ENCODE measurements at regions of chr21 and their contacts with region 1.

Region 1: GRCh38 chr21:15472108-15473040 is 257.4 kb upstream of the USP25 start:
- DNase-seq: no peak
- ATAC-seq: no peak
- H3K4me3 ChIP-seq: no peak overlapping the region
- H3K27ac ChIP-seq: no peak overlapping the region
- H3K4me1 ChIP-seq: peaks cover 0 to 7% (median 0%) of the 10 kb centered on the region in 12 donors
- H3K27me3 ChIP-seq: no peaks in the 10 kb centered on the region
- CTCF ChIP-seq: no peak
- POLR2A ChIP-seq: no peak

Region 2: DNA sequence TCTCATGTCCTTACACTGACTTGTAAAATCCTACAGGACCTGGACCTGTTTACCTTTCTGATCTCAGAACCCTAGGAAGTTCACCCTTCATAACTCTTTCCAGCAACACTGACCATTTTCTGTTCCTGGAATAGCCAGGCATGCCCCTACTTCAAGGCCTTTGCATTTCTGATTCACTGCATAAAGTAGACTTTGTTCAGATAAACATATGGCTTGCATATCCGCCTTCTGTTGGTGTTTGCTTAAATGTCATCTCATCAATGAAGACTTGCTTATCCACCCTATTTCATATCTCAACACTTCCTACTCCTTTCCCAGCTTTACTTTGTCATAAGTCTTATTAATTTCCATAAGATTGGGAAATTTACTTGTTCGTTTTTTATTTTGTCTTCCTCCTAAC is 1146.8 kb before region 1 on chr21:
- intact Hi-C with region 1: loop called in 1 of 10 experiments (anchors 5 kb)
- DNase-seq: no peak
- ATAC-seq: no peak
- H3K4me3 ChIP-seq: no peak overlapping the region
- H3K27ac ChIP-seq: no peak overlapping the region
- H3K4me1 ChIP-seq: no peaks in the 10 kb centered on the region
- H3K27me3 ChIP-seq: peaks cover 0 to 3% (median 0%) of the 10 kb centered on the region in 9 donors
- CTCF ChIP-seq: no peak
- POLR2A ChIP-seq: no peak

Region 3: DNA sequence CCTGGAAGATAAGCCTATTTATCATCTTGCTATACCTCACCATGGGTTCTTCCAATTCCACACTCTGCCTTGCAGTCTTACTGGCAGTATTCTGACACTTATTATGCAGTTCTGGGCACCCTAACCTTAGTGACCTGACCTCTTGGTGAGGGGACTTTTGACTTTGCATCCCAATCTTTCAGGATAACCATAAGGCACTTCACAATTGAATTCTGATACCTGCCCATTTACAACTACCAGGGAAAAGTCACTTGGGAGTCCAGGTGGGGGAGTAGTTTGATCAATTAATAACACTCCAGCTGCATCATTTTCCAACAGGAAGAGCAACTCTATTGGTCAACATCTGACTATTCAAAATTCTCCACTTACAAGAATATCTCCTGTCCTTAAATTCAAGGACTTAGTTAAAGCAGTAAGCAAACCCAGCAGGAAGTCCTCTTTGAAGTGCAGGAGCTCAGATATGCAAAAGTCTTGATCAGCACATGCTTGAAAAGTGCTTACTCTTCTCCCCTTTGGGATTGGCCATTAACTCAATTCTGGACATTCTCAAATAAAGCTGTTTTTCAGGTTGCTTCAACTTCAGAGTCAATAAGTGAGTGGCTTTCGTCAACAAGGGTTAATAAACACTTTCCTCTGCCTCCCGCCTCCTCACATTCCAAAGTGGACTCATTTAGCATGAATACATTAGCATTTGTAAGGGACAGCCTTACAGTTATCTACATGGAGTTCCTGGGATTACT is 230.2 kb before region 1 on chr21:
- intact Hi-C with region 1: loop called in 1 of 10 experiments (anchors 10 kb)
- DNase-seq: no peak
- ATAC-seq: no peak
- H3K4me3 ChIP-seq: no peak overlapping the region
- H3K27ac ChIP-seq: no peak overlapping the region
- H3K4me1 ChIP-seq: peaks cover 0 to 3% (median 0%) of the 10 kb centered on the region in 12 donors
- H3K27me3 ChIP-seq: no peaks in the 10 kb centered on the region
- CTCF ChIP-seq: no peak
- POLR2A ChIP-seq: no peak

Region 4: GRCh38 chr21:15408089-15408488 is 64.3 kb before region 1 on chr21:
- intact Hi-C with region 1: loop called in 2 of 10 experiments (anchors 10 kb)
- DNase-seq: no peak
- ATAC-seq: no peak
- H3K4me3 ChIP-seq: no peak overlapping the region
- H3K27ac ChIP-seq: no peak overlapping the region
- H3K4me1 ChIP-seq: no peaks in the 10 kb centered on the region
- H3K27me3 ChIP-seq: no peaks in the 10 kb centered on the region
- CTCF ChIP-seq: no peak
- POLR2A ChIP-seq: no peak

Region 5: DNA sequence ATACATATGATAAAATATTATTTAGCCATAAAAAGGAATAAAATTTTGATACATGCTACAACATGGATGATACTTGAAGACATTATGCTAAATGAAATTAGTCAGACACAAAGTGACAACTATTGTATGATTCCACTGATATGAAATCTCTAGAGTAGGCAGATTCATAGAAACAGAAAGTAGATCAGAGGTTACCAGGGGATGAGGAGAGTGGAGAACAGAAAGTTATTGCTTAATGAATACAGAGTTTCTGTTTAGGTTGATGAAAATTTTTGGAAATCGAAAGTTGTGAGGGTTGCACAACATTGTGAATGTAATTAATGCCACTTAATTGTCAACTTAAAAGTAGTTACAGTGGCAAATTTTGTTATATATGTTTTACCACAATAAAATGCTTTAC is 58.3 kb before region 1 on chr21:
- intact Hi-C with region 1: loop called in 2 of 10 experiments (anchors 10 kb)
- DNase-seq: no peak
- ATAC-seq: no peak
- H3K4me3 ChIP-seq: no peak overlapping the region
- H3K27ac ChIP-seq: no peak overlapping the region
- H3K4me1 ChIP-seq: peaks cover 0 to 23% (median 0%) of the 10 kb centered on the region in 12 donors
- H3K27me3 ChIP-seq: no peaks in the 10 kb centered on the region
- CTCF ChIP-seq: no peak
- POLR2A ChIP-seq: no peak